Heart right ventricle (tissue), 16 donors: ENCODE measurements at regions of chr2 and their contacts with region 1.

Region 1: GRCh38 chr2:176269319-176270099 is at the start of gene MTX2:
- DNase-seq: peak; percentile 67 to 78
- ATAC-seq: peak; percentile 98 to 100 (median 99)
- H3K4me3 ChIP-seq: peak within 1 kb of the TSS; percentile 57 to 96 (median 78)
- H3K27ac ChIP-seq: peak within 1 kb of the TSS; percentile 66 to 96 (median 92)
- H3K4me1 ChIP-seq: peaks cover 0 to 37% (median 16%) of the 10 kb centered on the region in 9 donors
- H3K27me3 ChIP-seq: peaks cover 0 to 6% (median 0%) of the 10 kb centered on the region in 7 donors
- CTCF ChIP-seq: peak in 4 of 9 donors; percentile 6 to 39 (median 31)
- total RNA-seq, gene MTX2: 37.3 to 55.8 (median 46.8) TPM

Region 2: DNA sequence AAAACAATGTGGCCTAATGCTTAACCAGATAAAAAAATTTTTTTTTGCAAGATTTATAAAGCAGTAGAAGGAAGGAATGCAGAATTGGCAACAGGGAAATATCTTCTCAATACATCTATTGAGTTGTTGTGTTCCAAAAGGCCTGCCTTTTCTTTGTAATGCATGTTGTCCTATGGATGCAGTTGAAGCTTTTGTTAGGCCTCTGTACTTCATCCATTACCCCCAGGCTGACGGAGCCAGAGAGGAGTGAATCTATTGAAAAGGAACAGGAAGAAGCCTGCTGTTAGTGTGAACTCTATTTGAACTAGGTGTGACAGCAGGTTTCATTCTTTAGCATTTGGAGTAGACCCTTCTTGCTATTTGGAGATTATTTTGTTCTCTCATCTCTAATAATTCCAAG is 56.2 kb after region 1 on chr2:
- intact Hi-C with region 1: loop called in 1 of 10 experiments (anchors 10 kb)
- DNase-seq: no peak
- ATAC-seq: no peak
- H3K4me3 ChIP-seq: no peak overlapping the region
- H3K27ac ChIP-seq: no peak overlapping the region
- H3K4me1 ChIP-seq: peaks cover 0 to 13% (median 0%) of the 10 kb centered on the region in 9 donors
- H3K27me3 ChIP-seq: no peaks in the 10 kb centered on the region
- CTCF ChIP-seq: no peak